A673 (cell line): ENCODE measurements at regions of chr17 and their contacts with region 1.

Region 1: GRCh38 chr17:40178660-40179059 is 1.4 kb downstream of the RAPGEFL1 start:
- DNase-seq: no peak
- H3K4me3 ChIP-seq: peak overlapping the region; percentile 55
- H3K27ac ChIP-seq: no peak overlapping the region
- H3K4me1 ChIP-seq: peaks cover 13% of the 10 kb centered on the region
- H3K27me3 ChIP-seq: no peaks in the 10 kb centered on the region
- CTCF ChIP-seq: no peak

Region 2: DNA sequence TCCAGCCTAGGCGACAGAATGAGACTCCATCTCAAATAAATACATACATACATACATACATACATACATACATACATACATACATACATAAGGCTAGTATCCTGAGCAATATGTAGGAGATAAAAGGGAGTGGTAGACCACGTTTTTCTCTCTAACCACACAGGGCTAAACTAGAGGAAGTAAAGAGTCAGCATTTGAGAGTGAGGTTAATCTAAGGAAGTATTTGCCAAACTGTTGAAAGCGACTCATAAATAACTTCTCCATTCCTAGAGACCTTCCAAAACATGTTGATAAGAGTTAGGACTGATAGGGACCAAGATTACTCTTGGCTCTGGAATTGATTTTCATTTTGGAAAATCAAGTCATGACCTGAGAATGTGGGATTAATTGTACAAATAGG is 639.8 kb before region 1 on chr17:
- CTCF ChIA-PET with region 1: no interaction called
- POLR2A ChIA-PET with region 1: no interaction called
- intact Hi-C with region 1: no loop called
- DNase-seq: no peak
- H3K4me3 ChIP-seq: no peak overlapping the region
- H3K27ac ChIP-seq: no peak overlapping the region
- H3K4me1 ChIP-seq: no peaks in the 10 kb centered on the region
- H3K27me3 ChIP-seq: no peaks in the 10 kb centered on the region
- CTCF ChIP-seq: no peak

Region 3: DNA sequence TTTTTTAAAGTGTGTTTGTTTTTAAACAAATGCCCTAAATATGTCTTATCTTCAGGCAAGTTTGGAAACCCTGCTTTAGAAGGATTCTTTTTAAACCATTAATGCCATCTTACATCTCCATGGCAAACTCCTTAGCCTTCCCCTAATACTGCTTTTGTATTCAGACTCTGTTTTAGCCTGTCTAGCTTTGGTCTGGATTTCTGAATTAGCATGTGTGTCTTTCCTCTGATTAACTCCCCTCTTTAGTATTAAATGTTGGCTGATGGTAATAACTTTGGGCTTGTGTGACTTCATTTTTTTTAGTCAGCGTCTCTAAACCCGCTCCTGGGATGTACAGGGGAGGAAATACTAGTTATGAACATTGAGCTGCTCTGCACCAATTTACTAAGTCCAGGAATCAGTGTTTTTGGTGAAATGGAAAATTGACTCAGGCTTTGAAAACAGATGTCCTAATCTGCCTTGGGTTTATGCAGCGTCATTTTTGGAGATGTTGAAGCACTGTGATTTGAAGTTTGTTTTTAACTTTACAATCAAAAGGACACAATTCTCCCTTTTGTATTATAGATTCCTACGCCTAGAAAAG is 62.7 kb after region 1 on chr17:
- CTCF ChIA-PET with region 1: no interaction called
- POLR2A ChIA-PET with region 1: interaction called, 10 read pairs
- intact Hi-C with region 1: no loop called
- DNase-seq: no peak
- H3K4me3 ChIP-seq: no peak overlapping the region
- H3K27ac ChIP-seq: no peak overlapping the region
- H3K4me1 ChIP-seq: no peaks in the 10 kb centered on the region
- H3K27me3 ChIP-seq: no peaks in the 10 kb centered on the region
- CTCF ChIP-seq: no peak